IMR-90 (cell line): ENCODE measurements at regions of chr10 and their contacts with region 1.

Region 1: GRCh38 chr10:13056456-13057077 is 43.4 kb upstream of the OPTN start:
- DNase-seq: peak; percentile 16
- ATAC-seq: peak; percentile 85
- H3K4me3 ChIP-seq: no peak overlapping the region
- H3K27ac ChIP-seq: no peak overlapping the region
- H3K4me1 ChIP-seq: no peaks in the 10 kb centered on the region
- H3K27me3 ChIP-seq: peaks cover 13% of the 10 kb centered on the region; the same call in 1 of the 2 replicates
- CTCF ChIP-seq: peak; percentile 49
- POLR2A ChIP-seq: no peak
- RAD21 ChIP-seq: peak; percentile 51

Region 2: DNA sequence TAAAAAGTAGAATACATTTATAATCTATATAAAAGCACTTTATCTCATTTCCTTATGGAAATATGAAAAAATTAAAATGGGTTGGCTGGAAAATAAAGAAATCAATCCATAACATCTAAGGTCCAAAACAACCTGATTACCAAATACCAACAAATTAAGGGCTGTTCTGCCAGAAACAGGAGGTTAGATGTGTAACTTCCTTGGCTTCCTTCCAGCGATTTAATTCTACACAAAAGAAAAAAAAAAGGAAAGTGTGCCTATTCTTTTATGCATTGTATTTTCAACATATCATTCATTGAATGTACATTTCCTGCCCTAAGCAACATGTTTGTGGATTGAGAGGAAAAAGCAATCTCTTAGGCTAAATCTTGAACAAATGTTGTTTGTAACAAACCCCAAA is 1408.9 kb before region 1 on chr10:
- CTCF ChIA-PET with region 1: no interaction called
- POLR2A ChIA-PET with region 1: no interaction called
- dilution Hi-C with region 1: no loop called
- in situ Hi-C with region 1: no loop called
- intact Hi-C with region 1: no loop called
- DNase-seq: no peak
- ATAC-seq: no peak
- H3K4me3 ChIP-seq: no peak overlapping the region
- H3K27ac ChIP-seq: no peak overlapping the region
- H3K4me1 ChIP-seq: peaks cover 2% of the 10 kb centered on the region; the same call in 1 of the 2 replicates
- H3K27me3 ChIP-seq: no peaks in the 10 kb centered on the region
- CTCF ChIP-seq: no peak
- POLR2A ChIP-seq: no peak
- RAD21 ChIP-seq: no peak

Region 3: DNA sequence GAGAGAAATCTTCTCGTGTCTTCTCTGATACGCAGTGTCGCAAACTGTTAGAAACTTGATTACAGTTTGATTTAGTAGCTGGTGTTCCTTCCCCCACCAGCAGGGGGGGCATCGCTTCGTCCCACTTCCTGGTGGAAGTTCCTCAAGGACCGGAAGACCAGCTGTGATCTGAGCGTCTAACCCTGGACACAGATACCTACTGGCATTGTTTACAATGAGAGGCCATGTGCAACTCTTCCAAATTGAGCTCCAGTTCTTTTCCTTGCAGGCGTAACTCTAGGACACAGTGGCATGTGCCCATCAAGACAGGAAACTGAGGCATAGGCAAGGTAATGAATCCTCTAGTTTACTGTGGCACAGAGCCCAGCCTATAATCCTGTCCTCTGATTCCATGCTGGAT is 274.0 kb before region 1 on chr10:
- CTCF ChIA-PET with region 1: no interaction called
- POLR2A ChIA-PET with region 1: no interaction called
- dilution Hi-C with region 1: no loop called
- in situ Hi-C with region 1: no loop called
- intact Hi-C with region 1: loop called (anchors 1 kb)
- DNase-seq: peak; percentile 29
- ATAC-seq: no peak; the same call in 1 of the 2 replicates
- H3K4me3 ChIP-seq: no peak overlapping the region
- H3K27ac ChIP-seq: no peak overlapping the region
- H3K4me1 ChIP-seq: peaks cover 2% of the 10 kb centered on the region; the same call in 1 of the 2 replicates
- H3K27me3 ChIP-seq: no peaks in the 10 kb centered on the region; the same call in 1 of the 2 replicates
- CTCF ChIP-seq: peak; percentile 64
- POLR2A ChIP-seq: no peak
- RAD21 ChIP-seq: peak; percentile 53

Region 4: GRCh38 chr10:12907656-12908055 is 148.9 kb before region 1 on chr10:
- CTCF ChIA-PET with region 1: no interaction called
- POLR2A ChIA-PET with region 1: no interaction called
- dilution Hi-C with region 1: no loop called
- in situ Hi-C with region 1: no loop called
- intact Hi-C with region 1: loop called (anchors 1 kb)
- DNase-seq: peak; percentile 74
- ATAC-seq: peak; percentile 54
- H3K4me3 ChIP-seq: no peak overlapping the region
- H3K27ac ChIP-seq: no peak overlapping the region
- H3K4me1 ChIP-seq: no peaks in the 10 kb centered on the region; the same call in 1 of the 2 replicates
- H3K27me3 ChIP-seq: peaks cover 2% of the 10 kb centered on the region; the same call in 1 of the 2 replicates
- CTCF ChIP-seq: no peak
- POLR2A ChIP-seq: no peak
- RAD21 ChIP-seq: no peak